ENCODE measurements at regions of chr10 and their contacts with region 1.

Region 1: GRCh38 chr10:71569775-71570588 is 149.6 kb downstream of the C10orf105 start:
- DNase-seq: peak in 1 of 2 experiments; percentile 75
- H3K4me3 ChIP-seq: no peak overlapping the region
- H3K27ac ChIP-seq: no peak overlapping the region
- H3K4me1 ChIP-seq: no peaks in the 10 kb centered on the region
- H3K27me3 ChIP-seq: no peaks in the 10 kb centered on the region
- CTCF ChIP-seq: peak; percentile 97

Region 2: DNA sequence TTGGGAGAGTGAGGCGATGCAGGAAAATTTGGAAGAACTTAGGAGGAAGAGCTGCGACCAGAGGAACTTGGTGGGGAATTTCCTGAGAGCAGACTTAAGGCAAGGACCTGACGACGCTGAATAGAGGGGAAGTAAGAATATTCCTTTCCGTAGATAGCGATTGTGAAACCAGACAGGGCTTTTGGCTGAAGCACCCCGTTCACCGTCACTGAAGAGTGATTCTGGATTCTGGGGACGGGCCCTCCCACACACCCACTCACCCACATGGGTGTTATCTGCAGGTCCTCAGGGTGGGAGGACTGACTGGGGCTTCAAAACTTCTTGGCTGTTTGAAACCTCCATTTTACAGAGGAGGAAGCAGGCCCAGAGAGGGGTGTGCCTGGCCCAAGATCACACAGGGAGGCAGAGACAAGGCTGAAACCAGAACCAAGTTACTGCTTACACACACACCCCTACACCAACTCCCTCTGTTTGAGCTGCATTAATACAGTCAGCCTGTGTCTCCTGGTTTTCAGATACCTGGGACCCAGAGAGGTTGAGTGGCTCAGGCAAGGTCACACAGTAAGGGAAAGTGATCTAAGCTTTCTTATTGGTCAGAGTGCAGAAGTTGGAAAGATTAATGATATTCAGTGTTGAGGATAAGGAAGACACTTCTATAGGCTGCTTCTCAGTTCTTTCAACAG is 210.5 kb before region 1 on chr10:
- CTCF ChIA-PET with region 1: no interaction called
- POLR2A ChIA-PET with region 1: no interaction called
- intact Hi-C with region 1: no loop called
- DNase-seq: no peak
- H3K4me3 ChIP-seq: no peak overlapping the region
- H3K27ac ChIP-seq: no peak overlapping the region
- H3K4me1 ChIP-seq: peaks cover 17% of the 10 kb centered on the region
- H3K27me3 ChIP-seq: no peaks in the 10 kb centered on the region
- CTCF ChIP-seq: no peak

Region 3: GRCh38 chr10:71383972-71384687 is 185.9 kb before region 1 on chr10:
- CTCF ChIA-PET with region 1: no interaction called
- POLR2A ChIA-PET with region 1: no interaction called
- intact Hi-C with region 1: loop called (anchors 1 kb)
- DNase-seq: peak in 1 of 2 experiments; percentile 77
- H3K4me3 ChIP-seq: no peak overlapping the region
- H3K27ac ChIP-seq: no peak overlapping the region
- H3K4me1 ChIP-seq: peaks cover 8% of the 10 kb centered on the region
- H3K27me3 ChIP-seq: no peaks in the 10 kb centered on the region
- CTCF ChIP-seq: peak; percentile 98

Region 4: GRCh38 chr10:71396084-71396720 is 173.8 kb before region 1 on chr10:
- CTCF ChIA-PET with region 1: interaction called, 3 read pairs
- POLR2A ChIA-PET with region 1: interaction called, 7 read pairs
- intact Hi-C with region 1: loop called (anchors 2 kb)
- DNase-seq: peak; percentile 49 to 70
- H3K4me3 ChIP-seq: peak overlapping the region; percentile 60
- H3K27ac ChIP-seq: no peak overlapping the region
- H3K4me1 ChIP-seq: peaks cover 41% of the 10 kb centered on the region
- H3K27me3 ChIP-seq: peaks cover 8% of the 10 kb centered on the region; the same call in 1 of the 2 replicates
- CTCF ChIP-seq: peak; percentile 57

Region 5: GRCh38 chr10:71486484-71487114 is 83.4 kb before region 1 on chr10:
- CTCF ChIA-PET with region 1: interaction called, 4 read pairs
- POLR2A ChIA-PET with region 1: no interaction called
- intact Hi-C with region 1: loop called (anchors 5 kb)
- DNase-seq: peak in 1 of 2 experiments; percentile 42
- H3K4me3 ChIP-seq: no peak overlapping the region
- H3K27ac ChIP-seq: no peak overlapping the region
- H3K4me1 ChIP-seq: peaks cover 10% of the 10 kb centered on the region; the same call in 1 of the 2 replicates
- H3K27me3 ChIP-seq: no peaks in the 10 kb centered on the region
- CTCF ChIP-seq: peak; percentile 65

Region 6: GRCh38 chr10:71512775-71513539 is 57.0 kb before region 1 on chr10:
- CTCF ChIA-PET with region 1: no interaction called
- POLR2A ChIA-PET with region 1: no interaction called
- intact Hi-C with region 1: no loop called
- DNase-seq: peak; percentile 88 to 90
- H3K4me3 ChIP-seq: no peak overlapping the region
- H3K27ac ChIP-seq: no peak overlapping the region
- H3K4me1 ChIP-seq: peaks cover 25% of the 10 kb centered on the region
- H3K27me3 ChIP-seq: no peaks in the 10 kb centered on the region
- CTCF ChIP-seq: no peak

Region 7: GRCh38 chr10:71647526-71648253 is 77.7 kb after region 1 on chr10:
- CTCF ChIA-PET with region 1: no interaction called
- POLR2A ChIA-PET with region 1: no interaction called
- intact Hi-C with region 1: no loop called
- DNase-seq: no peak
- H3K4me3 ChIP-seq: no peak overlapping the region
- H3K27ac ChIP-seq: no peak overlapping the region
- H3K4me1 ChIP-seq: peaks cover 19% of the 10 kb centered on the region
- H3K27me3 ChIP-seq: no peaks in the 10 kb centered on the region
- CTCF ChIP-seq: peak; percentile 41

Region 8: DNA sequence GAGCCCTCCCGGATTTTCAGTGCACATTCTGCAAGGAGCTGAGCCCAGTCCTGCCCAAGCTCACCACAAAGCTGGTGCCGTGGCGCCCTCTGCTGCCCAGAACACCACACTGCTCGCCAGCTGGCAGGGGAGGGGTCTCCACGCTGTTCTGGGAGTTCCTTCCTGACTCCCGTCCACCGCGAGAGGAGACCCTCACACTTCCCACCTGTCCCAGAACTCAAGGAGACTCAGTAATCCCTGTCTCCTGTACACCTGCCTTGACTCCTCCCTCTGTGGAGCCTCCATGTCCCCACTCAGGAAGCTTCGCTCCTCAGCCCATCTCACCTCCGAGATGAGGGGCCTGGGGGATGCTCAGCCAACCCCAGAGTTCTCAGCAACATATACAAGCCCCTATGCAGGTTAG is 138.3 kb after region 1 on chr10:
- CTCF ChIA-PET with region 1: interaction called, 6 read pairs
- POLR2A ChIA-PET with region 1: no interaction called
- intact Hi-C with region 1: loop called (anchors 1 kb)
- DNase-seq: peak in 1 of 2 experiments; percentile 69
- H3K4me3 ChIP-seq: no peak overlapping the region
- H3K27ac ChIP-seq: no peak overlapping the region
- H3K4me1 ChIP-seq: peaks cover 6% of the 10 kb centered on the region; the same call in 1 of the 2 replicates
- H3K27me3 ChIP-seq: no peaks in the 10 kb centered on the region
- CTCF ChIP-seq: peak; percentile 97